Motor neuron (in vitro differentiated cells): ENCODE measurements at regions of chr1 and their contacts with region 1.

Region 1: GRCh38 chr1:94335950-94336349 is 82.2 kb upstream of the ABCD3 start:
- ATAC-seq: peak; percentile 82 to 93 (median 91)
- H3K4me3 ChIP-seq: no peak overlapping the region
- H3K27ac ChIP-seq: no peak overlapping the region
- H3K4me1 ChIP-seq: no peaks in the 10 kb centered on the region

Region 2: GRCh38 chr1:93629099-93630059 is 706.6 kb before region 1 on chr1:
- in situ Hi-C with region 1: loop called in 1 of 9 experiments (anchors 25 kb)
- ATAC-seq: peak; percentile 33 to 79 (median 74)
- H3K4me3 ChIP-seq: no peak overlapping the region
- H3K27ac ChIP-seq: no peak overlapping the region
- H3K4me1 ChIP-seq: peaks cover 12 to 15% of the 10 kb centered on the region in 2 donors

Region 3: DNA sequence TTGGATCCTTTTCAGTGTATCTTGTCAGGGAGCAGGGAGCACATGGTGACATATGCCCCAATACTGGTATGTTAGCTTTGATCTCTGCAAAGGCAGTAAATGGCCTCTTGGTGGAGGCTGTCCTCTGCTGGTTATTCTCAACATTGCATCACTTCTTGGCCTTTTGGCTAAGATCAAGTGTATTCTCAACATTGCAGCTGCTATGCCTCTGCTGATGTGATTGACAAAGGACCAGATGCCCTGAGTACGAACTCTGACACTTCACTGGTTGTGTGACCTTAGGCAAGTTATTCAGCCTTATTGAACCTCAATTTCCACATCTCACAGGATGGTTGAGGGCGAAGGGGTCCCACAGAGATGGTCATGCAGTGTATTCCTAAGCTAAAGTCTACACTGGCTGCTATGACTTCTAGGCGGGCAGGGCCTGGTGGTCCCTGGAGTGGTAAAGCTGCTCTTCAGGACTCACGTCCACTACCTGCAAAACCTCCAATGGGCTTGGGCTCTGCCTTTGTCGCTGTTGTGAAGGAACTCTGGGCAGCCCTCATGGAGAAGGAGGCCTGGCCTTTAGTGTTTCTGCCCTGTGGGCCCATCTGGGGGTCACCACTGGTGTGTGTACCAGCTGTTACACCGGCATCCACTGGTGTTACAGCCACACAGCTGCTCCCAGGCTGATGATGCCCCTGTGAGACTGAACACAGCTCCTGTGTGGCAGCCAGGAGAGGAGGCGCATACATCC is 521.7 kb before region 1 on chr1:
- in situ Hi-C with region 1: no loop called
- ATAC-seq: peak; percentile 86 to 95 (median 92)
- H3K4me3 ChIP-seq: no peak overlapping the region
- H3K27ac ChIP-seq: no peak overlapping the region
- H3K4me1 ChIP-seq: peaks cover 13 to 16% of the 10 kb centered on the region in 2 donors

Region 4: GRCh38 chr1:93919780-93920179 is 416.2 kb before region 1 on chr1:
- in situ Hi-C with region 1: no loop called
- ATAC-seq: peak in 1 of 8 experiments; percentile 62
- H3K4me3 ChIP-seq: no peak overlapping the region
- H3K27ac ChIP-seq: no peak overlapping the region
- H3K4me1 ChIP-seq: no peaks in the 10 kb centered on the region

Region 5: DNA sequence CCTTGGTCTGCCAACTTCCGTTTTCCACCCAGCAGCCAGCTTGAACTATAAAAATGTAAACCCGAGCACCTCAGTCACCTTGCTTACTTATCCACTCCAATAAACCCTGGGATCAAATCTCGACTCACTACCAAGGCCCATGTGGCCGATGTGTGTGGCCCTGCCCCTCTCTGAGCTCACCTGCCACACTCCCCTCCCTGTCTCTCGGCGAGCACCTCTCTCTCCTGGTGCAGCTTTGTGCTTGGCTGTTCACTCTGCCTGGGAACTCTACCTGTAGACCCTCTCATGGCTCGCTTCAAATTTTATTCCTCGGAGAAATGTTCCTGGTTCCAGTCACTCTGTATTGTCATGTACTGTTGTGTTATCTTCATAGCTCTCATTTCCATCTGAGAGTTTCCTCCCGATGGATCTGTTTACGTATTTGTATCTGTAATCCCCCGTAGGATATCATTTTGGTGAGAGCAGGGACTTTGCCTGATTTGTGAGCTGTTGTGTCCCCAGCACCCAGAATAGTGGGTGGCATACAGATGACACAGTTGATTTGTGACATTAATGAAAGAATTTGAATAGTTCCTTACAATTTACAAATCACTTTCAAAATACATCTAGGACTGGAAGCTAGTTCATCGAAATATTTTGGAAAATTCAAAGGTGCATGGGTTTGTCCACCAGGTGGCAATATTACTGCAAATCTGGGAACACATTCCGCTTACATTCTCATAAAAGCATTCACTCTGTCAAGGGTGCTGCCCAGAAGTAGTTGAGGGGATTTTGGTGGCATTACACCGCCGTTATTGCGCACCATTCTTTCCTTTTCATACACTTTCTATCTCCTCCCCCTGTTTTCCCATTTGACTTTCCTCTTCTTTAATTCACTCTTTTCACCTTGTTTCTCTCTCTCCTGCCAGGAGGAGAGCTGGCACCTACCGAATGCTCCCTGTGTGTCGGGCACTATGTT is 310.3 kb before region 1 on chr1:
- in situ Hi-C with region 1: loop called in 4 of 9 experiments (anchors 10 to 25 kb)
- ATAC-seq: peak in 6 of 8 experiments; percentile 24 to 82 (median 46)
- H3K4me3 ChIP-seq: no peak overlapping the region
- H3K27ac ChIP-seq: no peak overlapping the region
- H3K4me1 ChIP-seq: no peaks in the 10 kb centered on the region

Region 6: GRCh38 chr1:94045465-94046056 is 290.4 kb before region 1 on chr1:
- in situ Hi-C with region 1: loop called in 4 of 9 experiments (anchors 25 kb)
- ATAC-seq: peak; percentile 44 to 98 (median 86)
- H3K4me3 ChIP-seq: no peak overlapping the region
- H3K27ac ChIP-seq: no peak overlapping the region
- H3K4me1 ChIP-seq: peaks cover 8 to 14% of the 10 kb centered on the region in 2 donors

Region 7: GRCh38 chr1:94463765-94464330 is 127.9 kb after region 1 on chr1:
- in situ Hi-C with region 1: loop called in 1 of 9 experiments (anchors 10 kb)
- ATAC-seq: peak in 3 of 8 experiments; percentile 79 to 91 (median 86)
- H3K4me3 ChIP-seq: no peak overlapping the region
- H3K27ac ChIP-seq: no peak overlapping the region
- H3K4me1 ChIP-seq: no peaks in the 10 kb centered on the region